A673 (cell line): ENCODE measurements at regions of chr5 and their contacts with region 1.

Region 1: DNA sequence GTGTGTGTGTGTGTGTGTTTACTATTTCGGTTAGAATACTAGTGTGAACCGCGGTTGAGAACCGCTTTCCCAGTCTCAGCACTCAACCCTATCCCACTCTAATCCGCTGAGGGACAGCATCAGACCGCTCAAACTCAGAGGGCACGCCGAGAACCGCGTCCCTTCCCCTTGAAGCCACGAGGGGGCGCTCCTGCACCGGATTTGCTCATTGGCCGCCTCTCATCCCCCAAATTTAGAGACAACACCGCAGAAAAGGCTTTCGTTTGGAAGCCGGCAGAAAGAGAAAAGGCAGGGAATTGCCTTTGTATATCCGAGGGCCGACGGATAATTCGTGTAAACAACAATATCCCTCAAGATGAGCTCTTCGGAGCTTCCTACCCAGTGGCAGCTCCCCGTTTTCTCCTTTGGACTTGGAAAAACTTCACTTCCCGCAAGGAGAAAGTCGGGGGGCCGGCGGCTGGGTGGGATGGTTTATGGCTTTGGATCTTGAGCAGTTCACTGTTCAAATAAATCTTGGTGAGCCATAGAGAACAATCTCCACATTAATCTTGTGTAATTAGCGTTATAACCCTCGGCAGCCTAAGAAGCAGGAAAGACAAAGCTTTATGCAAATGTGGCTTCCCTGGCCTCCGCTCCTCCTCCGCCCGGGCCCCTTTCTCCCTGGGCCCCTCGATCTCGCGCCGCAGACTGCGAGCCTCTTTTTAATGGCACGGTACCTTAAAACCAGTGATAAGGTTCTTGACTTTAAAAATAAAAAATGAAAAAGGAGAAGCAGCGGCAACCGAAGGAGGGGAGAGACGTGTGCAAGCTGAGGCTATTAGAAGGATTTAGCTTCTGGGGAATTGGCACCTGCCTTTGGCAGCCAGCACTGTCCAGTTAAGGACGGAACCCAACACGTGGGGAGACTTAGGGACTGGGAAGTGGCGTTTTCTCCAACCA is 296.8 kb downstream of the PARP8 start:
- DNase-seq: peak; percentile 89
- H3K4me3 ChIP-seq: peak overlapping the region; percentile 59
- H3K27ac ChIP-seq: peak overlapping the region; percentile 43
- H3K4me1 ChIP-seq: peaks cover 12% of the 10 kb centered on the region
- H3K27me3 ChIP-seq: no peaks in the 10 kb centered on the region
- CTCF ChIP-seq: peak; percentile 98

Region 2: GRCh38 chr5:51272957-51273356 is 309.8 kb after region 1 on chr5:
- CTCF ChIA-PET with region 1: no interaction called
- POLR2A ChIA-PET with region 1: no interaction called
- intact Hi-C with region 1: loop called (anchors 5 kb)
- DNase-seq: no peak
- H3K4me3 ChIP-seq: no peak overlapping the region
- H3K27ac ChIP-seq: no peak overlapping the region
- H3K4me1 ChIP-seq: no peaks in the 10 kb centered on the region
- H3K27me3 ChIP-seq: no peaks in the 10 kb centered on the region
- CTCF ChIP-seq: no peak

Region 3: DNA sequence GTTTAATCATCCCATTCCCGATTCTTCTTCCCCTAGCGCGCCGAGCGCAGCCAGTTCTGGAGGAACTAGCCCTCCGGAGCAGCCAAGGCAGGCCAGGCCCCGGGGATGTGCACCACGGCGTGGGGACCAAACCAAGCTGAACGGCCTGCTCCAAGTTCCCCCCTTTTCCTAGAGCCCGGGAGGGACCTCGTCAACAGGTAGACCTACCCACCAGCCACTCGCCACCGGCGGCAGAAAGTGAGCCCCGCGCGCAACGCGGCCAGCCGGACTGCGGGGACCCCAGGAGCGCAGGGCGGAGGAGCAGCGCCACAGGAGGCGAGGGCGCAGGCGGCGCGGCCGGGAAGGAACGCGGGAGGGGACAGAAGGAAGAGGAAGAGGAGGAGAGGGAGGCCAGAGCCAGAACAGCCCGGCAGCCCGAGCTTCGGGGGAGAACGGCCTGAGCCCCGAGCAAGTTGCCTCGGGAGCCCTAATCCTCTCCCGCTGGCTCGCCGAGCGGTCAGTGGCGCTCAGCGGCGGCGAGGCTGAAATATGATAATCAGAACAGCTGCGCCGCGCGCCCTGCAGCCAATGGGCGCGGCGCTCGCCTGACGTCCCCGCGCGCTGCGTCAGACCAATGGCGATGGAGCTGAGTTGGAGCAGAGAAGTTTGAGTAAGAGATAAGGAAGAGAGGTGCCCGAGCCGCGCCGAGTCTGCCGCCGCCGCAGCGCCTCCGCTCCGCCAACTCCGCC is 419.7 kb after region 1 on chr5 and contains the start of gene ISL1:
- CTCF ChIA-PET with region 1: no interaction called
- POLR2A ChIA-PET with region 1: no interaction called
- intact Hi-C with region 1: loop called (anchors 1 kb)
- DNase-seq: peak; percentile 97
- H3K4me3 ChIP-seq: peak within 1 kb of the TSS; percentile 87
- H3K27ac ChIP-seq: peak within 1 kb of the TSS; percentile 91
- H3K4me1 ChIP-seq: peaks cover 7% of the 10 kb centered on the region
- H3K27me3 ChIP-seq: no peaks in the 10 kb centered on the region
- CTCF ChIP-seq: no peak
- total RNA-seq, gene ISL1: 11.1 and 11.8 TPM in 2 replicates

Region 4: GRCh38 chr5:51960617-51961115 is 997.5 kb after region 1 on chr5:
- CTCF ChIA-PET with region 1: no interaction called
- POLR2A ChIA-PET with region 1: no interaction called
- intact Hi-C with region 1: loop called (anchors 2 kb)
- DNase-seq: peak; percentile 51
- H3K4me3 ChIP-seq: no peak overlapping the region
- H3K27ac ChIP-seq: no peak overlapping the region
- H3K4me1 ChIP-seq: peaks cover 8% of the 10 kb centered on the region
- H3K27me3 ChIP-seq: no peaks in the 10 kb centered on the region
- CTCF ChIP-seq: peak; percentile 67

Region 5: DNA sequence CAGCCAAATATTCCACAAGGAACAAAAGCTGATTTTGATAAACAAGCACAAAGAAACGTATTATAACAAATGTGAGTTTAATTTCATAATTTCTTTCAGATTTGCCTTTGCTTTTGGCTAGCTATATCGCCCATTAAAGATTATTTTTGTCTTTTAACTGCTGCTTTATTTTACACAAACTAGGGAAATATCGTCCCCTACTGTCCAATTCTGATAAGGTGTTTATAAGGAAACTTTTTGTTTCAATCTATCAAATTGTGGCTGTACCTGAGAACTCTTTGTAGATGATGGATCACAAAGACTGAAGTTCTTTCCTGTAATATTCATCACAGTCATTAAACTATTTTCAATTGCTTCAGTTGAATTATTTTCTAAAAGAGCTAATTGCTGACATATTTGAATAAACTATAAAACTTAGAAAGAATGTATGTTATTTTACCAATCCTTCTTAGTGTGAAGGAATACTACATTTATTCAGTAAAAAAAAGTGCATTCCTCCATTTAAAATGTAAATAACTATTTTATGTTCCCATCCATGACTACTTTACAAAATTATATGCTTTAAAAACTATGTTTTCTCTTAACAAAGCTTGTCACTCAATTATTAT is 1393.2 kb after region 1 on chr5:
- CTCF ChIA-PET with region 1: no interaction called
- POLR2A ChIA-PET with region 1: no interaction called
- intact Hi-C with region 1: loop called (anchors 1 kb)
- DNase-seq: peak; percentile 73
- H3K4me3 ChIP-seq: no peak overlapping the region
- H3K27ac ChIP-seq: peak overlapping the region; percentile 43
- H3K4me1 ChIP-seq: peaks cover 17% of the 10 kb centered on the region
- H3K27me3 ChIP-seq: no peaks in the 10 kb centered on the region
- CTCF ChIP-seq: peak; percentile 85

Region 6: DNA sequence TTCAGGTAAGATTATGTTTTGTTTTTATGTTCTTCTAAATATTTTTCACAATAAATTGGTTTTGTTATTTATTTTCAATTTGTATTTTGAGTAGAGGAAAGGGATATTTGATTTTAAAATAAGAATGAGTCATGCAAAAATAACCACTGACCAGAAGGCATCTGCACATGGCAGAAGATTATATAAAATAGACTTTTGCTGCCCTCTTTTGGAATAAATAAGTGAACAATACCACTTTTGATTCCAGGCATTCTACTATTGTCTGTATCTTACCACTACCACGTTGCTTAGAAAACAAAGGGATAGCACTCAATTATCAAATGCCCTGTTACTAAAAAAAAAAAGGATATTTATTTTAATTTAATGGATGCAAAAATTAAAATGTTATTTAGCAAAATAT is 1597.2 kb after region 1 on chr5:
- CTCF ChIA-PET with region 1: no interaction called
- POLR2A ChIA-PET with region 1: no interaction called
- intact Hi-C with region 1: loop called (anchors 2 kb)
- DNase-seq: peak; percentile 80
- H3K4me3 ChIP-seq: no peak overlapping the region
- H3K27ac ChIP-seq: no peak overlapping the region
- H3K4me1 ChIP-seq: peaks cover 26% of the 10 kb centered on the region
- H3K27me3 ChIP-seq: no peaks in the 10 kb centered on the region
- CTCF ChIP-seq: peak; percentile 50

Region 7: GRCh38 chr5:52915176-52915875 is 1952.1 kb after region 1 on chr5:
- CTCF ChIA-PET with region 1: no interaction called
- POLR2A ChIA-PET with region 1: no interaction called
- intact Hi-C with region 1: loop called (anchors 10 kb)
- DNase-seq: peak; percentile 80
- H3K4me3 ChIP-seq: peak overlapping the region; percentile 41
- H3K27ac ChIP-seq: no peak overlapping the region
- H3K4me1 ChIP-seq: no peaks in the 10 kb centered on the region
- H3K27me3 ChIP-seq: no peaks in the 10 kb centered on the region
- CTCF ChIP-seq: peak; percentile 90